Common myeloid progenitor, CD34-positive (primary cell): ENCODE measurements at regions of chr1 and their contacts with region 1.

Region 1: DNA sequence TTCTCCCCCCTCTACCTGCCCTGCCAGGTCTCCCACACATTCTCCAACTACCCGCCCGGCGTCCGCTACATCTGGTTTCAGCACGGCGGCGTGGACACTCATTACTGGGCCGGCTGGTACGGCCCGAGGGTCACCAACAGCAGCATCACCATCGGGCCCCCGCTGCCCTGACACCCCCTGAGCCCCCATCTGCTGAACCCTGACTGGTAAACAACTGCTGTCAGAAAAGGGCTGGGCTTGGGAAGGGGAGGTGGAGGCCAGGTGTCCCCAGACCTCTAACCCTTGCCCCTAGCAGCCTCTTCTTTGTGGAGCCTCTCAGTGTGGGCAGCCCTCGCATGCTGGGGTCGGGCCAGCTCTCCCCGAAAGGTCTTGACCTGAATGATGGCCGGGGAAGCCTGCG is 2.9 kb upstream of the FBXO6 start:
- DNase-seq: no peak
- H3K4me3 ChIP-seq: no peak overlapping the region
- H3K27ac ChIP-seq: no peak overlapping the region
- H3K4me1 ChIP-seq: peaks cover 0 to 13% (median 9%) of the 10 kb centered on the region in 4 experiments
- H3K27me3 ChIP-seq: no peaks in the 10 kb centered on the region

Region 2: GRCh38 chr1:11515368-11516300 is 145.5 kb before region 1 on chr1:
- CTCF ChIA-PET with region 1: no interaction called
- POLR2A ChIA-PET with region 1: no interaction called
- DNase-seq: no peak
- H3K4me3 ChIP-seq: no peak overlapping the region
- H3K27ac ChIP-seq: no peak overlapping the region
- H3K4me1 ChIP-seq: no peaks in the 10 kb centered on the region
- H3K27me3 ChIP-seq: no peaks in the 10 kb centered on the region

Region 3: GRCh38 chr1:11581451-11581991 is 79.6 kb before region 1 on chr1:
- CTCF ChIA-PET with region 1: no interaction called
- POLR2A ChIA-PET with region 1: no interaction called
- DNase-seq: no peak
- H3K4me3 ChIP-seq: no peak overlapping the region
- H3K27ac ChIP-seq: no peak overlapping the region
- H3K4me1 ChIP-seq: no peaks in the 10 kb centered on the region
- H3K27me3 ChIP-seq: peaks cover 0 to 35% (median 5%) of the 10 kb centered on the region in 5 experiments

Region 4: DNA sequence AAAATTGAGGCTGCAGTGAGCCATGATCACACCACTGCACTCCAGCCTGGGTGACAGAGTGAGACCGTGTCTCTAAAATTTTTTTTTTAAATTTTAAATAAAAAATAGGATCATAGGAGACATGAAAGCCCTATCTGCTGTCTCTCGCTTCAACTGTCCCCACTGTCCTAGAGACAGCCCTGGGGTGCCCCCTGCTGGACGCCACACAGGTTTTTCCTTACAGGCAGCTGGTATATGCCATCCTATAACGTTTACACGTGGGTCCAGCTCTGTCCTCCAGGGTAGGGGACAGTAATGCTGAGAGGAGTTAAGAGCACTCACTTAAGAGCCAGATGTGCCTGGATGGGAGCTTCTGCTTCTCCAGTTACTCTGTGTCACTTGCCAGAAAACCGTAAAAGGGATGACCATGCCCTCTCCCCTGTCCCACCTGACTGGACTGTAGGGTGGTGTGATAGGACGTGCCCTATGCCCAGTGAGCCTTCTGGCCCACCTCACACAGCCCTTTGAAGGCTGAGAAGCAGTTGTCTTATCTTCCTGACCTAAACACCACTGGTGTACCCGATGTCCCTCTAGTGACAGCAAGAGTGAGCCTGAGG is 15.3 kb before region 1 on chr1:
- CTCF ChIA-PET with region 1: interaction called, 27 read pairs
- POLR2A ChIA-PET with region 1: no interaction called
- DNase-seq: peak; percentile 74 to 90 (median 84)
- H3K4me3 ChIP-seq: no peak overlapping the region
- H3K27ac ChIP-seq: no peak overlapping the region
- H3K4me1 ChIP-seq: peaks cover 0 to 14% (median 9%) of the 10 kb centered on the region in 4 experiments
- H3K27me3 ChIP-seq: peaks cover 0 to 32% (median 11%) of the 10 kb centered on the region in 5 experiments